ENCODE measurements at regions of chr12 and their contacts with region 1.

Region 1: GRCh38 chr12:109385339-109386067 is 37.8 kb downstream of the MYO1H start:
- DNase-seq: peak; percentile 53
- ATAC-seq: peak; percentile 78
- H3K4me3 ChIP-seq: no peak overlapping the region
- H3K27ac ChIP-seq: no peak overlapping the region
- H3K4me1 ChIP-seq: peaks cover 3% of the 10 kb centered on the region; the same call in 1 of the 2 replicates
- H3K27me3 ChIP-seq: peaks cover 6% of the 10 kb centered on the region
- CTCF ChIP-seq: peak; percentile 74
- POLR2A ChIP-seq: no peak
- RAD21 ChIP-seq: peak; percentile 90

Region 2: GRCh38 chr12:109110988-109111495 is 274.5 kb before region 1 on chr12:
- CTCF ChIA-PET with region 1: interaction called, 14 read pairs
- POLR2A ChIA-PET with region 1: no interaction called
- dilution Hi-C with region 1: no loop called
- in situ Hi-C with region 1: loop called (anchors 5 kb)
- intact Hi-C with region 1: loop called (anchors 1 kb)
- DNase-seq: peak; percentile 70
- ATAC-seq: peak; percentile 97
- H3K4me3 ChIP-seq: peak overlapping the region; percentile 68
- H3K27ac ChIP-seq: peak overlapping the region; percentile 78
- H3K4me1 ChIP-seq: no peaks in the 10 kb centered on the region
- H3K27me3 ChIP-seq: no peaks in the 10 kb centered on the region
- CTCF ChIP-seq: no peak
- POLR2A ChIP-seq: peak; percentile 21; the same call in 1 of the 2 replicates
- RAD21 ChIP-seq: no peak

Region 3: DNA sequence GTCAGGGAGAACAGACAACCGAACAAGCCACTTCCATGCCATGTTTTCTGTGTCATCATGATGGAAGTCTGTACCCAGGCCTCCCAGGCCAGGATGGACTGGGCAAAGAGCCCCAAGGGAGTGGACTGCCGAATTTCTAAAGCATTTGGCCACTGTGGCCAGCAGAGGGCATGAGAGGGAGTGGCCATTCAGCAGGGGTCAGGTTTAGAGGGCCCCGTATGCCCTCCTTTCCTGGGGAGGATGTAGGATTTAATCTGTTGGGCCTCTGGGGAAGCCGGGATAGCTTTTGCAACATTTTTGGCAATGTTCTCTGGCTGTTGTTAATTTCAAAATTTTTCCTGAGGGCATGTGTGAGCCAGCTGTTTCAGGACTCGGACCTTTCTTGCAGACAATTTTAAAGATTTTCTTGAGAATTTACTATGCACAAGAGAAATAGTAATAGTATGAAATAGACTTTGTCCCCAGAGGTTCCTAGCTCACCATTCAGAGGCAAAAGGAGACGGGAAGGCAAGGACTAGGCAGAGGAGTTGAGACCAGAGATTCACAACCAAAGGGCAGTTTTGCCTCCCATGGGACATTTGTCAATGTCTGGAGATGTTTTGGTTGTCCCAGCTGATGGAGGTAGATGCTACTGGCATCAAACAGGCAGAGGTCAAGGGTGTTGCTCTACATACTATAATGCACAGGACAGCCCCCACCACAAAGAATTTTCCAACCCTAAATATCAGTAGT is 251.2 kb before region 1 on chr12:
- CTCF ChIA-PET with region 1: no interaction called
- POLR2A ChIA-PET with region 1: no interaction called
- dilution Hi-C with region 1: no loop called
- in situ Hi-C with region 1: no loop called
- intact Hi-C with region 1: loop called (anchors 2 kb)
- DNase-seq: no peak
- ATAC-seq: peak; percentile 82
- H3K4me3 ChIP-seq: no peak overlapping the region
- H3K27ac ChIP-seq: no peak overlapping the region
- H3K4me1 ChIP-seq: peaks cover 4% of the 10 kb centered on the region; the same call in 1 of the 2 replicates
- H3K27me3 ChIP-seq: peaks cover 6% of the 10 kb centered on the region
- CTCF ChIP-seq: peak; percentile 38
- POLR2A ChIP-seq: no peak
- RAD21 ChIP-seq: peak; percentile 36

Region 4: GRCh38 chr12:109264095-109264942 is 121.2 kb before region 1 on chr12:
- CTCF ChIA-PET with region 1: interaction called, 13 read pairs
- POLR2A ChIA-PET with region 1: no interaction called
- dilution Hi-C with region 1: no loop called
- in situ Hi-C with region 1: loop called (anchors 5 kb)
- intact Hi-C with region 1: loop called (anchors 1 kb)
- DNase-seq: peak; percentile 41
- ATAC-seq: peak; percentile 87
- H3K4me3 ChIP-seq: no peak overlapping the region
- H3K27ac ChIP-seq: no peak overlapping the region
- H3K4me1 ChIP-seq: no peaks in the 10 kb centered on the region
- H3K27me3 ChIP-seq: no peaks in the 10 kb centered on the region
- CTCF ChIP-seq: peak; percentile 57
- POLR2A ChIP-seq: no peak
- RAD21 ChIP-seq: peak; percentile 57

Region 5: GRCh38 chr12:109428037-109428629 is 42.6 kb after region 1 on chr12:
- CTCF ChIA-PET with region 1: no interaction called
- POLR2A ChIA-PET with region 1: no interaction called
- dilution Hi-C with region 1: no loop called
- in situ Hi-C with region 1: no loop called
- intact Hi-C with region 1: no loop called
- DNase-seq: peak; percentile 79
- ATAC-seq: peak; percentile 98
- H3K4me3 ChIP-seq: no peak overlapping the region
- H3K27ac ChIP-seq: no peak overlapping the region
- H3K4me1 ChIP-seq: no peaks in the 10 kb centered on the region
- H3K27me3 ChIP-seq: peaks cover 13% of the 10 kb centered on the region; the same call in 1 of the 2 replicates
- CTCF ChIP-seq: peak; percentile 96
- POLR2A ChIP-seq: no peak
- RAD21 ChIP-seq: peak; percentile 87

Region 6: DNA sequence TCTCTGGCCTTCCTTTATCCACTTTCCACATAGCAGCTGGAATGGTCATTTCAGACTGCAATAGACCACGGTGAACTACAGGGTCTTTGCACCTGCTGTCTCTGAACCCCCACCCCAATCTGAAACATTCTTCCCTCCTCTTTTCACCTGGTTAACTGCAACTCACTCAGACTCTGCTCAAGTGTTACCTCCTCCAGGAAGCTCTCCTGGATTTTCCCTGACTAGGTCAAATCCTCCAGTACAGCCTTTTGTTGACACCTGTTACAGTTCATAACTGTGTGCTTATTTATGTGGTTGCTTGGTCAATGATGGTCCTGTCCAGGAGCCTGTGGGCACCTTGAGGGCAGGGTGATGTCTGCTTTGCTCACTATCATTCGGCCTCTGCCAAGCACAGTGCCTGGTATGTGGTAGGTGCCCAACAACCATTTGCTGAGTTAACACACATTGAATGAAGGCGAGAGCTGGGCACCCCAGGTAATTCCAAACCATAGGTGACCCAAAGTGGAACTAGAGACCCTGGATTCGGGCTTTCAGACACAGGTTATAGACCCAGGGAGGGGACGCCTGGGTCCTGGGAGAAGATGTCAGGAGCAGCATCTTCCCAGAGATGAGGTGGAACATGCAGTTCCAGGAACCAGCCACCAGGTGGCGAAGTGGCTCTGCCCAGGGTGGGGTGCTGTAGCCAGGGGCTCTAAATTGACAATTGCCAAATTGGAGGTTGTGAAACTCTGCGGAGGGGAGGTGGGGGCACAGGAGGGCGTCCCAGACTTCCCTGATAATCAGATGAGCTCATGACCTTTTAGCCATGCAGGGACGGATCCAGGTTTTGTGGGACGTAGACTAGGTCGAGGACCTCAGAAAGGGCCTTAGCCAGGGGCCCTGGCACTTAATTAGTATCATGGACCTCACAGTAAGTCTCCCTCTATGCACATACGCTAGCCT is 419.6 kb after region 1 on chr12:
- CTCF ChIA-PET with region 1: no interaction called
- POLR2A ChIA-PET with region 1: no interaction called
- dilution Hi-C with region 1: no loop called
- in situ Hi-C with region 1: no loop called
- intact Hi-C with region 1: no loop called
- DNase-seq: peak; percentile 39
- ATAC-seq: peak; percentile 99
- H3K4me3 ChIP-seq: no peak overlapping the region
- H3K27ac ChIP-seq: no peak overlapping the region
- H3K4me1 ChIP-seq: no peaks in the 10 kb centered on the region
- H3K27me3 ChIP-seq: no peaks in the 10 kb centered on the region
- CTCF ChIP-seq: peak; percentile 89
- POLR2A ChIP-seq: no peak
- RAD21 ChIP-seq: peak; percentile 86